K562 (cell line): ENCODE measurements at regions of chr16 and their contacts with region 1.

Region 1: DNA sequence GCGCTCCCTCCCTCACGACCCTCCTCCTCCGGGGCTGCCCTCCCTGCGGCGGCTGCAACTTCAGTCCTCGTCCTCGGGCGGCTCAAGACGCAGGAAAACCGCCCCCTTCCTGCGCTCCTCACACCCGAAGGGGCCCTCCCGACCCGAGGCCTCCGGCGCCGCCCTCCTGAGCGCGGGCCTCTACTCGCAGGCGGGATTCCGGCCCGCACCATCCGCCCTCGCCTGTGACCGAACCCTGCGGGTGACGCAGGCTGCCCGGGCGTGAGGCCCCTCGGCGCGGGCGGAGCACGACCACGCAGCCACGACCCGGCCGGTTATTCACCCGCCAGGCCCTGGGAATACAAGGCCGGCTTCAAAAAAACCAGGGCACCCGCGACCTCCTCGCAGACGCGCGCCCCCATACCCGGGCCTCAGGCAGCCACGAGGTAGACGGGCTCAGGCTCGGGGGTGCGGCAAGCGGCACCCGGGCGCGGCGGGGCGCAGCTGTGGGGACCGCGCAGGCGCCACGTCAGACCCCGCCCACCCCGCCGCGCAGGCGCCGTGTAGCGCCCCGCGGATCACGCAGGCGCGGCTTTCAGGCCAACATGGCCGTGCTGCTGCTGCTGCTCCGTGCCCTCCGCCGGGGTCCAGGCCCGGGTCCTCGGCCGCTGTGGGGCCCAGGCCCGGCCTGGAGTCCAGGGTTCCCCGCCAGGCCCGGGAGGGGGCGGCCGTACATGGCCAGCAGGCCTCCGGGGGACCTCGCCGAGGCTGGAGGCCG is at the start of gene SPG7:
- DNase-seq: peak; percentile 93 to 96 (median 94)
- ATAC-seq: peak; percentile 83
- H3K4me3 ChIP-seq: peak within 1 kb of the TSS; percentile 77
- H3K27ac ChIP-seq: peak within 1 kb of the TSS; percentile 90
- H3K4me1 ChIP-seq: peaks cover 29 to 55% of the 10 kb centered on the region in 2 experiments; a peak in 4 of 5 replicates
- H3K27me3 ChIP-seq: no peaks in the 10 kb centered on the region; a peak in 1 of 5 replicates
- CTCF ChIP-seq: no peak
- EP300 ChIP-seq: no peak
- POLR2A ChIP-seq: peak; percentile 86
- RAD21 ChIP-seq: no peak
- polyA plus RNA-seq, gene SPG7: 5.8 to 7.0 TPM

Region 2: DNA sequence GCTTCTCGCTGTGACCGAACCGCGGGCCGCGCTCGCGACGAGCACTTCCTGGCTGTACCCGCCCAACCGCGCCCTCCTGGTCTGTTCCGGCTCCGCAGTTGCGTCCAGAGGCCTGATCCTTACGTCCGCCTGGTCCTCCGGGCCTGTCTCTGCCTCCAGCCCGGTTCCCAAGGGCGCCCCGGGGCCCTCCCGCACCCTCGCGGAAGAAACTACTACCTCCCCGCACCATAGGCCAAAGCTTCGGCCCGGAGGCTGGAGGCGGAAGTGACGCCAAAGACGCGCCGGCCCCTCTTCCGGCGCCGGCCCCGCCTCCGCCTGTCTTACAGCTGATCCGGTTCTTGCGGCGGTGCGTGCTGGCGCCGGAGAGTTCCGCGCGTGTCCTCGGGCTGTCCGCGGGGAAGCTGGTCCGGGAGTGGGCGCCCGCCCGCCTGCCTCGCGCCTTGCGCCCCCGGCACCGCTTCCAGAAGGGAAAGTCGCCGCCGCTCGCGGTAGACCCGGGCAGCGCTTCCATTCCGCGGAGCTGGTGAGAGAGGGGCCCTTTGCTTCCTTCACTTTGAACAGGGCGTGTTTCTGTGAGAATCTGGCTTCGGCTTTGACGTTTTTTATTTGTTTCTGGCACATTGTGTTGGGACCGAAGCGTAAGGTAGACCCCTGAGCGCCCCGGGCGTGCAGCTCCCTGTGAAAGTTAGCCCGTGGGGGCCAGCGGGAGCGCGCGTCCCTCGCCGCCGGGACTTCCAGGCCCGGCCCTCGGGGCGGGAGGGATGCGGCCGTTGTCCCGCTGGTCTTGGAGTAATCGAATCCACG is 290.4 kb before region 1 on chr16 and contains the start of gene ZNF778:
- CTCF ChIA-PET with region 1: no interaction called
- POLR2A ChIA-PET with region 1: no interaction called
- in situ Hi-C with region 1: no loop called
- intact Hi-C with region 1: loop called (anchors 5 kb)
- DNase-seq: peak; percentile 88 to 92 (median 88)
- ATAC-seq: peak; percentile 80
- H3K4me3 ChIP-seq: peak within 1 kb of the TSS; percentile 90
- H3K27ac ChIP-seq: peak within 1 kb of the TSS; percentile 78
- H3K4me1 ChIP-seq: peaks cover 20 to 31% of the 10 kb centered on the region in 2 experiments; a peak in 4 of 5 replicates
- H3K27me3 ChIP-seq: no peaks in the 10 kb centered on the region
- CTCF ChIP-seq: peak in 1 of 3 experiments; percentile 2; a peak in 1 of 6 replicates
- EP300 ChIP-seq: no peak
- POLR2A ChIP-seq: peak; percentile 94
- RAD21 ChIP-seq: no peak
- polyA plus RNA-seq, gene ZNF778: 0.70 to 0.80 TPM

Region 3: DNA sequence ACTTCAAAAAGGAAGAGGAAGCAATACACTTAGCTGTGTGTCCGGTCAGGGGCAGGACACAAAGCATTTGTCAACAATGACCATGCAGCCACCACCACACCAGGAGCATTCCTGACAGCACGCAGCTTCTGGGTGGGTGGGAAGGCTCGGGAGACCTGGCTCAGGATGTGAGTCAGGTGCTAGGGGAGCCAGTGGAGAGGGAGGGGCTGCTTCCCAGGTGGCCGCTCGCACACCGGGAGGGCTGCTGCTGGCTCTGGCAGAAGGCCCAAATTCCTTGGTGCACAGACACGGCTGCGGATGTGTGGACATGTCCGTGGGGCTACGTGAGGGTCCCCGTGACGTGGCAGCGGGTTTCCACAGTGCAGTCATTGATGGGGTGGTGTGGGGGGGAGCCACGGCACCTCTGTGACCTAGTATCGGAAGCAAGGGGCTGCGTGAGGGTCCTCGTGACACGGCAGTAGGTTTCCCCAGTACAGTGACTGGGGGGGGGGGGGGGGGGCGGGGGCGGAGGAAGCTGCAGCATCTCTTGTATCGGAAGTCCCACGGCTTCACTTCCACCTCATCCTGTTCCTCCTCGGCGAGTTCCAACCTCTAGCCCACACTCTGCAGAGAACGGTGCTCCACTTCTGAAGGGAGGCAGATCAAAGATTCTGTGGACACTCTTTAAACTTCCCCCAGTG is 177.7 kb before region 1 on chr16:
- CTCF ChIA-PET with region 1: interaction called, 12 read pairs
- POLR2A ChIA-PET with region 1: no interaction called
- in situ Hi-C with region 1: no loop called
- intact Hi-C with region 1: loop called (anchors 5 kb)
- DNase-seq: peak in 3 of 4 experiments; percentile 39 to 51 (median 48)
- ATAC-seq: no peak
- H3K4me3 ChIP-seq: no peak overlapping the region
- H3K27ac ChIP-seq: peak overlapping the region; percentile 57; the same call in 2 of the 3 replicates
- H3K4me1 ChIP-seq: peaks cover 40 to 69% of the 10 kb centered on the region in 2 experiments
- H3K27me3 ChIP-seq: no peaks in the 10 kb centered on the region
- CTCF ChIP-seq: no peak
- EP300 ChIP-seq: no peak
- POLR2A ChIP-seq: no peak
- RAD21 ChIP-seq: no peak

Region 4: GRCh38 chr16:89453501-89454321 is 54.3 kb before region 1 on chr16:
- CTCF ChIA-PET with region 1: no interaction called
- POLR2A ChIA-PET with region 1: no interaction called
- in situ Hi-C with region 1: no loop called
- intact Hi-C with region 1: loop called (anchors 10 kb)
- DNase-seq: peak; percentile 40 to 52 (median 45)
- ATAC-seq: peak; percentile 78
- H3K4me3 ChIP-seq: no peak overlapping the region
- H3K27ac ChIP-seq: peak overlapping the region; percentile 32; the same call in 1 of the 3 replicates
- H3K4me1 ChIP-seq: peaks cover 21 to 32% of the 10 kb centered on the region in 2 experiments
- H3K27me3 ChIP-seq: no peaks in the 10 kb centered on the region
- CTCF ChIP-seq: peak in 2 of 3 experiments; percentile 33 to 48; a peak in 4 of 6 replicates
- EP300 ChIP-seq: no peak
- POLR2A ChIP-seq: no peak
- RAD21 ChIP-seq: 0 out of 4 replicates have a peak, but pooled peaks of 1 of the 2 experiments have one; percentile 17

Region 5: DNA sequence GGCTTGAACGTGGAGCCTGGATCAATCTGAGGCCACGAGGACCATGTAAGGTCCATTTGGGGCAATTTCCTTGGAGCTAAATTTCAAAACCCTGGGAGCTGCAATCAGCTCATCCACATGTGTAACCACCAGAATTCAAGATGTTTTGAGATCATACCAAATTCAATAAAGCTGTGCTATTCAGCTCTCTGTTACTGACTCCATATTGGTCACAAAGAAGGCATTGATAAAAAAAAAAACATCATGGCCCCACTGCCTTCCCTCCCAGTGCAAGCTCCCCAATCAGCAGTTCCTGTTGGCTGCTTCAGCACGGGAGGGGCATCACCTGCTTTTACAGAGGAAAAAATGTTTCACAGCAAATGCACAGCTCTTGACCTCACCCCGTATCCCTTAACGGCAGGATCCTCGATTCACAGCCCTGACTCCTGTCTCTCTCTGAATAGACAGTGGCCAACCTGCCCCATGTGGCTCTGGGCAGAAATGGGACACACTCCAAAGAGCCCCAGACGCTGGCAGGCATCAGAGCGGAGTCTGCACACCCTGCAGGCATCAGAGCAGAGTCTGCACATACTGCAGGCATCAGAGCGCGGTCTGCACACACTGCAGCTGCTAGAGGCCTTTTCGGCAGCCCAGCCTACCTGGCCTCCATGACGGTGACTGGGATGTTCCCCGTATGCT is 271.4 kb after region 1 on chr16:
- CTCF ChIA-PET with region 1: no interaction called
- POLR2A ChIA-PET with region 1: no interaction called
- in situ Hi-C with region 1: no loop called
- intact Hi-C with region 1: no loop called
- DNase-seq: no peak
- ATAC-seq: no peak
- H3K4me3 ChIP-seq: no peak overlapping the region
- H3K27ac ChIP-seq: no peak overlapping the region
- H3K4me1 ChIP-seq: no peaks in the 10 kb centered on the region
- H3K27me3 ChIP-seq: no peaks in the 10 kb centered on the region
- CTCF ChIP-seq: no peak
- EP300 ChIP-seq: no peak
- POLR2A ChIP-seq: no peak
- RAD21 ChIP-seq: no peak